Activated T-helper 1 cell treated with anti-CD3 and anti-CD28 coated beads, Interleukin-12 subunit alpha, Interleukin-12 subunit beta, Interleukin-2, Interleukin-4 antibody, amounts not matched to agents 30 ng/mL and 10 ng/mL and 1 ng/mL, durations not matched to agents 14 hours and 24 hours and 36 hours (primary cell): ENCODE measurements at regions of chr2 and their contacts with region 1.

Region 1: DNA sequence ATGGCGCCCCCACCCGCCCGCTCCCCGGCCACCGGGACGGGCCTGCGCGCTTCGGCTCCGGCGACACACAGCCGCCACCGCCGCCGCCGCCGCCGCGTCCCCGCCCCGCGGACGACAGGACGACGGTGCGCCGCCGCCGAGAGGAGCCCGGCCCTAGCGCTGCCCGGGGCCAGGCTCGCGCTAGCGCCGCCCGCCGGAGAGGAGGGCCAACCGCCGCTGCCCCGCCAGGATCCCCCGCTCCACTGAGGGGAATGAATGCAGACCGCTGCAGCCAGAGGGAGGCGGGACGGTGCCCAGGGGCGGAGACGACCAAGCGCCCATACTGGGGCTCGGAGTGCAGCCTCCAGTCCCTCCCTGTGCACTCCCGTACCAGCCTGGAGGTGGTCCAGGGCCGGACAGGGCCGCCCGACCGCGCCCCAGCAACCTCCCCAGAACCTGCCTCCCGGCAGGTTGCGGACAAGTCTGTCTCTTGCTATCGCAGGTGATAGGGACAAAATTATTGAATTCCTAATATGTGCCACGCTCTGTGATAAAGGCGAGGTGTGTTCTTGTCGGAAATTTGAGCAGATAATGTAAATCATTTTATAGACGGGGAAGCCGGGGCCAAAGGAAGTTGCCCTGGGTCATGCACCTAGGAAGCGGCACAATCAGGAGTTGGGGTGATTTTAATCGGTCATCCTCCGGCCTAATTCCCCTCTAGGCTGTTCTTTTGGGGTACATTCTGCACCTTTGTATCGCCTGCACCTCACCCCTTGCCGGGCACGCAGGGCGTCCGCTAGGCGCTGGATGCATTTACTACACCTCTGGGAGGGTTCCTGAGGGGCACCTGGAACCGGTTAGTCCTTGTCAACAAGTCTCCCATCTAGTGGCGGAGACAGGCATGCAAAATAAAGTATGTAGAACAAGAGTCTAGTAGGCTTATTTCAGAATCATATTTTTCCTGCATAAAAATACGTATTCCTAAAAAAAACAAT is at the start of gene TEX261:
- DNase-seq: peak; percentile 90
- H3K4me3 Mint-ChIP-seq: peak within 1 kb of the TSS; percentile 99
- H3K27ac Mint-ChIP-seq: peak within 1 kb of the TSS; percentile 92
- H3K4me1 Mint-ChIP-seq: peaks cover 45% of the 10 kb centered on the region
- H3K27me3 Mint-ChIP-seq: peaks cover 4% of the 10 kb centered on the region
- total RNA-seq, gene TEX261: 89.4 and 97.4 TPM in 2 replicates

Region 2: GRCh38 chr2:70964596-70965386 is 30.3 kb before region 1 on chr2:
- intact Hi-C with region 1: loop called (anchors 1 kb)
- DNase-seq: peak; percentile 73
- H3K4me3 Mint-ChIP-seq: peak overlapping the region; percentile 89
- H3K27ac Mint-ChIP-seq: no peak overlapping the region
- H3K4me1 Mint-ChIP-seq: peaks cover 9% of the 10 kb centered on the region
- H3K27me3 Mint-ChIP-seq: peaks cover 27% of the 10 kb centered on the region

Region 3: DNA sequence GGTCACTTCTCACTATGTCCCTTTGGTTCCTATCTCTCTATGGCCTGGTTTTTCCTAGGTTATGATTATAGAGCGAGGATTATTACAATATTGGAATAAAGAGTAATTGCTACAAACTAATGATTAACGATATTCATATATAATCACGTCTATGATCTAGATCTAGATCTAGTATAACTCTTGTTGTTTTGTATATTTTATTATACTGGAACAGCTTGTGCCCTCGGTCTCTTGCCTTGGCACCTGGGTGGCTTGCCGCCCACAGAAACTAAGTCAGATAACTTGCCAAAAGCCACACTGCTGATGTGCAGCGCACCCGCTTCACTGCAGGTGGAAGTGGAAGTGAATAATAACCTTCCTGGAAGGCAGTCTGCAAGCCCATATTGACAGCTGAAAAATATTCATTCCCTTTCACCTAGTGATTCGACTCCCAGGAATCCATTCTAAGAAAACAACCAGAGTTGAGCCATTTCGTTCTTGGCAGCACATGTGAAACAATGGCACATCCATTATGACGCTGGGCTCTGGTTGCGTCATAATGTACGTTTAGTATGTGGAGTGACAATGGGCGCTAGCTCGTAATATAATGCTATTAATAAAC is 17.3 kb before region 1 on chr2:
- intact Hi-C with region 1: loop called (anchors 1 kb)
- DNase-seq: no peak
- H3K4me3 Mint-ChIP-seq: peak overlapping the region; percentile 78
- H3K27ac Mint-ChIP-seq: no peak overlapping the region
- H3K4me1 Mint-ChIP-seq: peaks cover 18% of the 10 kb centered on the region
- H3K27me3 Mint-ChIP-seq: peaks cover under 1% of the 10 kb centered on the region

Region 4: GRCh38 chr2:70984576-70985282 is 10.3 kb before region 1 on chr2:
- intact Hi-C with region 1: loop called (anchors 1 kb)
- DNase-seq: peak; percentile 73
- H3K4me3 Mint-ChIP-seq: no peak overlapping the region
- H3K27ac Mint-ChIP-seq: peak overlapping the region; percentile 2
- H3K4me1 Mint-ChIP-seq: peaks cover 7% of the 10 kb centered on the region
- H3K27me3 Mint-ChIP-seq: no peaks in the 10 kb centered on the region

Region 5: GRCh38 chr2:71331581-71332434 is 336.8 kb after region 1 on chr2 and contains the start of gene ZNF638:
- intact Hi-C with region 1: loop called (anchors 5 kb)
- DNase-seq: peak; percentile 90
- H3K4me3 Mint-ChIP-seq: peak within 1 kb of the TSS; percentile 99
- H3K27ac Mint-ChIP-seq: peak within 1 kb of the TSS; percentile 100
- H3K4me1 Mint-ChIP-seq: peaks cover 27% of the 10 kb centered on the region
- H3K27me3 Mint-ChIP-seq: peaks cover 6% of the 10 kb centered on the region
- total RNA-seq, gene ZNF638: 88.8 and 96.8 TPM in 2 replicates

Region 6: GRCh38 chr2:71721362-71721665 is 726.3 kb after region 1 on chr2:
- intact Hi-C with region 1: no loop called
- DNase-seq: no peak
- H3K4me3 Mint-ChIP-seq: no peak overlapping the region
- H3K27ac Mint-ChIP-seq: no peak overlapping the region
- H3K4me1 Mint-ChIP-seq: no peaks in the 10 kb centered on the region
- H3K27me3 Mint-ChIP-seq: no peaks in the 10 kb centered on the region